ENCODE measurements at regions of chr4 and their contacts with region 1.

Region 1: GRCh38 chr4:26319467-26319948 is 1.3 kb upstream of the RBPJ start:
- DNase-seq: peak; percentile 98 to 99
- H3K4me3 ChIP-seq: peak overlapping the region; percentile 77 to 79
- H3K27ac ChIP-seq: peak overlapping the region; percentile 97 to 99
- H3K4me1 ChIP-seq: peaks cover 0 to 22% of the 10 kb centered on the region in 2 donors
- H3K27me3 ChIP-seq: no peaks in the 10 kb centered on the region
- CTCF ChIP-seq: peak in 2 of 3 experiments; percentile 4 to 14

Region 2: GRCh38 chr4:25986807-25987206 is 332.7 kb before region 1 on chr4:
- intact Hi-C with region 1: loop called (anchors 5 kb)
- DNase-seq: peak in 1 of 2 donors; percentile 15
- H3K4me3 ChIP-seq: no peak overlapping the region
- H3K27ac ChIP-seq: no peak overlapping the region
- H3K4me1 ChIP-seq: peaks cover 0 to 9% of the 10 kb centered on the region in 2 donors
- H3K27me3 ChIP-seq: no peaks in the 10 kb centered on the region
- CTCF ChIP-seq: no peak

Region 3: GRCh38 chr4:26028793-26029567 is 290.5 kb before region 1 on chr4:
- intact Hi-C with region 1: loop called (anchors 2 kb)
- DNase-seq: peak in 1 of 2 donors; percentile 85
- H3K4me3 ChIP-seq: peak overlapping the region in 1 of 2 donors; percentile 51
- H3K27ac ChIP-seq: no peak overlapping the region
- H3K4me1 ChIP-seq: peaks cover 0 to 25% of the 10 kb centered on the region in 2 donors
- H3K27me3 ChIP-seq: no peaks in the 10 kb centered on the region
- CTCF ChIP-seq: peak; percentile 80 to 92 (median 85)

Region 4: GRCh38 chr4:26081795-26082498 is 237.6 kb before region 1 on chr4:
- intact Hi-C with region 1: loop called (anchors 5 kb)
- DNase-seq: no peak
- H3K4me3 ChIP-seq: no peak overlapping the region
- H3K27ac ChIP-seq: no peak overlapping the region
- H3K4me1 ChIP-seq: no peaks in the 10 kb centered on the region
- H3K27me3 ChIP-seq: no peaks in the 10 kb centered on the region
- CTCF ChIP-seq: peak; percentile 26 to 64 (median 55)

Region 5: DNA sequence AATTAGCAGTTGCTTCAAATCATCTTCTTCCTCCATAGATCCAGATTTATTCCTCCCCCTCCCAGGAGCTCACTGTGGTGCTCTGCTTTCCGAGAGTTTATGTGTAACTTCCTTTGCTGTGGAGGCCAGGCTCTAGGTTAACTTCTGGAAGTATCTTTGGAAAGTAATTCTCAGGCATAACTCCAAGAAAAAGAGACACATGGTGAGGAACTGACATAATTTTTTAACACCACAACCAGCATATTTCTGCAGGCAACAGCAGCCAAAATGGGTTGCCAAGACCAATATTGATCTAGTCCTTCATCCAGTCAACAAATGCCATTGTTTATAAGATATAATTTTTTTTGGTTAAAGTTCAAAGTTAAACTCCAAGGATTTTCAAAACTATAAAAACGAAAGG is 113.2 kb before region 1 on chr4:
- intact Hi-C with region 1: loop called (anchors 1 kb)
- DNase-seq: peak in 1 of 2 donors; percentile 66
- H3K4me3 ChIP-seq: no peak overlapping the region
- H3K27ac ChIP-seq: peak overlapping the region in 1 of 2 donors; percentile 51
- H3K4me1 ChIP-seq: peaks cover 0 to 25% of the 10 kb centered on the region in 2 donors
- H3K27me3 ChIP-seq: no peaks in the 10 kb centered on the region
- CTCF ChIP-seq: no peak

Region 6: GRCh38 chr4:26860157-26860921 is 540.8 kb after region 1 on chr4 and contains the start of gene STIM2:
- intact Hi-C with region 1: loop called (anchors 2 kb)
- DNase-seq: peak; percentile 88 to 98
- H3K4me3 ChIP-seq: peak within 1 kb of the TSS; percentile 95 to 100
- H3K27ac ChIP-seq: peak within 1 kb of the TSS; percentile 92 to 98
- H3K4me1 ChIP-seq: peaks cover 7 to 20% of the 10 kb centered on the region in 2 donors
- H3K27me3 ChIP-seq: no peaks in the 10 kb centered on the region
- CTCF ChIP-seq: peak in 2 of 3 experiments; percentile 27 to 35
- total RNA-seq, gene STIM2: 17.2 TPM

Measured in ascending aorta (tissue), 2 donors.